A673 (cell line): ENCODE measurements at regions of chr6 and their contacts with region 1.

Region 1: GRCh38 chr6:73520688-73521350 is at the start of gene EEF1A1:
- DNase-seq: peak; percentile 100
- H3K4me3 ChIP-seq: peak within 1 kb of the TSS; percentile 92
- H3K27ac ChIP-seq: peak within 1 kb of the TSS; percentile 100
- H3K4me1 ChIP-seq: peaks cover 20% of the 10 kb centered on the region
- H3K27me3 ChIP-seq: no peaks in the 10 kb centered on the region
- CTCF ChIP-seq: no peak
- total RNA-seq, gene EEF1A1: 9,320 and 9,713 TPM in 2 replicates

Region 2: DNA sequence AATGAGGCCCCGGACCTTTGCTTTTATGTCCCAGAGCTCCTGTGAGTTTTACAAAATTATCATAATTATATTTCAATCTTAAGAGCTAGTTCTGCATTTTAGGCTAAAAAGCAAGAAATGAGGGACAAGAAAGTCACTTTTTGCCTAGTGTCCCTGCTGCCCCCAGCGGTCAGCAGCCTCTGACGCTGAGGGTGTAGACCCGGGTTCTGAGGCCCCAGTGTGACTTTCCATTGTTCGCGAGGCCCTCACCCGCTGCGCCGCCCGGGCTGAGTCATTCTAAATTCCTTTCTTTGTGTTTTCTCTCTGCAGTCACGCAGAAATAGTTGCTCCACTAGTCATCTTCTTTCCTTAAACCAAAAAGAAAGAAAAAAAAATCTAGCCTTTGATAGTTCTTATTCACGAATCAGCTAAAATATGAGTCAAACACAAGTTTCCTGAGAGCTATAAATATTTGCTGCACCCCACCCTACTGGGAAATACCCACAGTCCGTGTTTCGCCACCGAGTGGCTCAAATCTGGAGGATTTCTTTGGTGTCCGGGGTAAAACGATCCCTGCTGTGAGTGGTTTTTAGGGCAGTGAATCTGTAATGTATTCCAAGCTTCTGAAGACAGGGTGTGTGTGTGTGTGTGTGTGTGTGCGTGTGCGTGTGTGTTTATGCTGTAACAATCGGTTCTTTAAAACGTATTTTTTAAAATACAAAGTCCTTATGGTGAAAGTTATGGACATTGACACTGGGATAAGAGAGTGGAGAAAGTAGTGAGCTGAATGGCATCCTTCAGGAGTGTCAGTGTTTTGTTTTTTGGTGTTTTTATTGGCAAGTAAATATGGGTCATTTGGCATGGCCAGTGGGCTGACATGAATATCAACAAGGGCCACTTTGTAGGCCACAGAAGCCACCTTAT is 59.7 kb after region 1 on chr6:
- CTCF ChIA-PET with region 1: no interaction called
- POLR2A ChIA-PET with region 1: interaction called, 6 read pairs
- intact Hi-C with region 1: loop called (anchors 2 kb)
- DNase-seq: peak; percentile 93
- H3K4me3 ChIP-seq: peak overlapping the region; percentile 12
- H3K27ac ChIP-seq: peak overlapping the region; percentile 95
- H3K4me1 ChIP-seq: peaks cover 23% of the 10 kb centered on the region
- H3K27me3 ChIP-seq: no peaks in the 10 kb centered on the region
- CTCF ChIP-seq: peak; percentile 50

Region 3: GRCh38 chr6:73653571-73654424 is 133.0 kb after region 1 on chr6 and contains the start of gene SLC17A5:
- CTCF ChIA-PET with region 1: no interaction called
- POLR2A ChIA-PET with region 1: interaction called, 3 read pairs
- intact Hi-C with region 1: loop called (anchors 5 kb)
- DNase-seq: peak; percentile 95
- H3K4me3 ChIP-seq: peak within 1 kb of the TSS; percentile 99
- H3K27ac ChIP-seq: peak within 1 kb of the TSS; percentile 75
- H3K4me1 ChIP-seq: no peaks in the 10 kb centered on the region
- H3K27me3 ChIP-seq: no peaks in the 10 kb centered on the region
- CTCF ChIP-seq: no peak
- total RNA-seq, gene SLC17A5: 6.1 and 9.0 TPM in 2 replicates